ENCODE measurements at regions of chr3 and their contacts with region 1.

Region 1: GRCh38 chr3:119809249-119810017 is 27.5 kb downstream of the NR1I2 start:
- DNase-seq: no peak
- ATAC-seq: no peak
- H3K4me3 ChIP-seq: peak overlapping the region; percentile 28 to 31
- H3K27ac ChIP-seq: no peak overlapping the region
- H3K4me1 ChIP-seq: no peaks in the 10 kb centered on the region
- H3K27me3 ChIP-seq: no peaks in the 10 kb centered on the region

Region 2: GRCh38 chr3:119069725-119070124 is 739.7 kb before region 1 on chr3:
- intact Hi-C with region 1: no loop called
- DNase-seq: no peak
- ATAC-seq: no peak
- H3K4me3 ChIP-seq: no peak overlapping the region
- H3K27ac ChIP-seq: no peak overlapping the region
- H3K4me1 ChIP-seq: no peaks in the 10 kb centered on the region
- H3K27me3 ChIP-seq: no peaks in the 10 kb centered on the region

Region 3: DNA sequence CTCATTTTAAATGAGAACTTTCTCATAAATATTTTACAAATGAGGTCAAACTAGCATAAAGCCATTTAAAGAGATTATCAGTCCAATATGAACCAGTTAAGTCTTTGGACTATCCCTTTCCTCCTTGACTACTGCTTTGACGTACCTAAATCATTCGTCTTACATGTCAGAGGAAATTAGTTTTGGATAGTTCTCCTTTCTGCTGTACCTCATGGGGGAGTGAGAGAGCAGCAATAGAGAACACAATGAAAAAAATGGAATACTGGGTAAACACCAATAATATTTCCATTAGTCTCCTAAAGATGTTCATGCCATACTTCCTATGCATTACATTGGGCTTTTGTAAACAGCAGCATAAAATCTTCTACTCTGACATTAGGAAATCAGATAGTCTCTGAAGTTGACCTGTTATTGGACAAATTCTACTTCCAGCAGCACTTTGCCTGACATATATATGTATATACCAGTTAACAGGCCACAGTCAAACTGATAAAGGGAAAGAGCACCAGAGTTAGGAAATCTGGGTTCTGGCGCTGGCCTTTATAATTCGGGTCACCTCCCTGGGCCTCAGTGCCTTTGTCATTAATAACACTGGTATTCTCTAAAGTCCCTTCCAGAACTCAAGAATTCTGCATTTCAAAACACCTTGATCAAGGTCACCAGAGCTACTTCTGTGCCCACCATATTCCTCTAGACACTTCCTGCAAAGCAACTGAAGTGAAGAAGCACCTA is 284.3 kb before region 1 on chr3:
- intact Hi-C with region 1: no loop called
- DNase-seq: no peak
- ATAC-seq: no peak
- H3K4me3 ChIP-seq: no peak overlapping the region
- H3K27ac ChIP-seq: no peak overlapping the region
- H3K4me1 ChIP-seq: no peaks in the 10 kb centered on the region
- H3K27me3 ChIP-seq: no peaks in the 10 kb centered on the region

Region 4: DNA sequence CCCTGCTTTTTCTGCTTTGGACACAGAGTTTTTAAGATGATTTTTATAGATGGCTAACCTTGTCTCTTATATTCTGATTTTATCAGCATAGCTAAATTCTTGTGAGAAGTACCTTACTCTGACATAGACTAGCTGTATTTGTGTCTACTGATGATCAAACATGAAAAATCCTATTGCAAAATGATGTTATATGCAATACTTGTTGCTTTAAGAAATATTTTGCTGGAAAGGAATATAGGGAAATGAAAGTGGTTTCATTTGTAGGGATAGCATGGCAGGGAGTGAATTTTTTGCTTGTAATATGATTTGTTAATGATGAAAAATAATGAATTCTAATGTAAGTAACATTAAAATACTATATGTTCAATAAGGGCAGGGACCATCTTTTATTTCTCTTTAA is 70.7 kb before region 1 on chr3:
- intact Hi-C with region 1: loop called in 1 of 2 experiments (anchors 5 kb)
- DNase-seq: no peak
- ATAC-seq: no peak
- H3K4me3 ChIP-seq: no peak overlapping the region
- H3K27ac ChIP-seq: no peak overlapping the region
- H3K4me1 ChIP-seq: no peaks in the 10 kb centered on the region
- H3K27me3 ChIP-seq: no peaks in the 10 kb centered on the region